Endothelial cell of umbilical vein (primary cell): ENCODE measurements at regions of chr9 and their contacts with region 1.

Region 1: GRCh38 chr9:35696525-35697215 is 6.9 kb upstream of the TPM2 start:
- DNase-seq: peak; percentile 59
- H3K4me3 ChIP-seq: no peak overlapping the region
- H3K27ac ChIP-seq: no peak overlapping the region
- H3K4me1 ChIP-seq: no peaks in the 10 kb centered on the region
- H3K27me3 ChIP-seq: no peaks in the 10 kb centered on the region
- CTCF ChIP-seq: peak; percentile 86 to 94
- POLR2A ChIP-seq: peak; percentile 30

Region 2: GRCh38 chr9:35603987-35604577 is 92.6 kb before region 1 on chr9:
- CTCF ChIA-PET with region 1: interaction called, 20 read pairs
- POLR2A ChIA-PET with region 1: no interaction called
- dilution Hi-C with region 1: no loop called
- intact Hi-C with region 1: no loop called
- DNase-seq: peak; percentile 100
- H3K4me3 ChIP-seq: peak overlapping the region; percentile 0 to 41 (median 27)
- H3K27ac ChIP-seq: no peak overlapping the region
- H3K4me1 ChIP-seq: peaks cover 16% of the 10 kb centered on the region
- H3K27me3 ChIP-seq: peaks cover 0 to 2% of the 10 kb centered on the region in 2 experiments
- CTCF ChIP-seq: peak; percentile 88 to 99
- POLR2A ChIP-seq: no peak

Region 3: GRCh38 chr9:35646533-35647265 is 50.0 kb before region 1 on chr9:
- CTCF ChIA-PET with region 1: interaction called, 14 read pairs
- POLR2A ChIA-PET with region 1: no interaction called
- dilution Hi-C with region 1: no loop called
- intact Hi-C with region 1: loop called (anchors 1 kb)
- DNase-seq: peak; percentile 91
- H3K4me3 ChIP-seq: peak overlapping the region; percentile 39 to 80 (median 47)
- H3K27ac ChIP-seq: peak overlapping the region; percentile 24
- H3K4me1 ChIP-seq: peaks cover 6% of the 10 kb centered on the region
- H3K27me3 ChIP-seq: peaks cover 0 to 2% of the 10 kb centered on the region in 2 experiments
- CTCF ChIP-seq: peak; percentile 91 to 98
- POLR2A ChIP-seq: peak; percentile 27

Region 4: DNA sequence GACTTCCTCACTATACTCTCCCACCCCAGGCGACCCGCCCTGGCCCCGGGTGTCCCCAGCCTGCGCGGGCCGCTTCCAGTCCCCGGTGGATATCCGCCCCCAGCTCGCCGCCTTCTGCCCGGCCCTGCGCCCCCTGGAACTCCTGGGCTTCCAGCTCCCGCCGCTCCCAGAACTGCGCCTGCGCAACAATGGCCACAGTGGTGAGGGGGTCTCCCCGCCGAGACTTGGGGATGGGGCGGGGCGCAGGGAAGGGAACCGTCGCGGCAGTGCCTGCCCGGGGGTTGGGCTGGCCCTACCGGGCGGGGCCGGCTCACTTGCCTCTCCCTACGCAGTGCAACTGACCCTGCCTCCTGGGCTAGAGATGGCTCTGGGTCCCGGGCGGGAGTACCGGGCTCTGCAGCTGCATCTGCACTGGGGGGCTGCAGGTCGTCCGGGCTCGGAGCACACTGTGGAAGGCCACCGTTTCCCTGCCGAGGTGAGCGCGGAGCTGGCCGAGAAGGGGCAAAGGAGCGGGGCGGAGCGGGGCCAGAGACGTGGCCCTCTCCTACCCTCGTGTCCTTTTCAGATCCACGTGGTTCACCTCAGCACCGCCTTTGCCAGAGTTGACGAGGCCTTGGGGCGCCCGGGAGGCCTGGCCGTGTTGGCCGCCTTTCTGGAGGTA is 20.8 kb before region 1 on chr9:
- CTCF ChIA-PET with region 1: interaction called, 12 read pairs
- POLR2A ChIA-PET with region 1: no interaction called
- dilution Hi-C with region 1: no loop called
- intact Hi-C with region 1: no loop called
- DNase-seq: peak; percentile 42
- H3K4me3 ChIP-seq: peak overlapping the region; percentile 34 to 43 (median 40)
- H3K27ac ChIP-seq: no peak overlapping the region
- H3K4me1 ChIP-seq: peaks cover 5% of the 10 kb centered on the region
- H3K27me3 ChIP-seq: peaks cover 3 to 11% of the 10 kb centered on the region in 2 experiments
- CTCF ChIP-seq: no peak
- POLR2A ChIP-seq: no peak

Region 5: GRCh38 chr9:35716230-35716629 is 19.6 kb after region 1 on chr9:
- CTCF ChIA-PET with region 1: interaction called, 53 read pairs
- POLR2A ChIA-PET with region 1: interaction called, 3 read pairs
- dilution Hi-C with region 1: no loop called
- intact Hi-C with region 1: no loop called
- DNase-seq: no peak
- H3K4me3 ChIP-seq: no peak overlapping the region
- H3K27ac ChIP-seq: no peak overlapping the region
- H3K4me1 ChIP-seq: no peaks in the 10 kb centered on the region
- H3K27me3 ChIP-seq: no peaks in the 10 kb centered on the region
- CTCF ChIP-seq: no peak
- POLR2A ChIP-seq: no peak

Region 6: DNA sequence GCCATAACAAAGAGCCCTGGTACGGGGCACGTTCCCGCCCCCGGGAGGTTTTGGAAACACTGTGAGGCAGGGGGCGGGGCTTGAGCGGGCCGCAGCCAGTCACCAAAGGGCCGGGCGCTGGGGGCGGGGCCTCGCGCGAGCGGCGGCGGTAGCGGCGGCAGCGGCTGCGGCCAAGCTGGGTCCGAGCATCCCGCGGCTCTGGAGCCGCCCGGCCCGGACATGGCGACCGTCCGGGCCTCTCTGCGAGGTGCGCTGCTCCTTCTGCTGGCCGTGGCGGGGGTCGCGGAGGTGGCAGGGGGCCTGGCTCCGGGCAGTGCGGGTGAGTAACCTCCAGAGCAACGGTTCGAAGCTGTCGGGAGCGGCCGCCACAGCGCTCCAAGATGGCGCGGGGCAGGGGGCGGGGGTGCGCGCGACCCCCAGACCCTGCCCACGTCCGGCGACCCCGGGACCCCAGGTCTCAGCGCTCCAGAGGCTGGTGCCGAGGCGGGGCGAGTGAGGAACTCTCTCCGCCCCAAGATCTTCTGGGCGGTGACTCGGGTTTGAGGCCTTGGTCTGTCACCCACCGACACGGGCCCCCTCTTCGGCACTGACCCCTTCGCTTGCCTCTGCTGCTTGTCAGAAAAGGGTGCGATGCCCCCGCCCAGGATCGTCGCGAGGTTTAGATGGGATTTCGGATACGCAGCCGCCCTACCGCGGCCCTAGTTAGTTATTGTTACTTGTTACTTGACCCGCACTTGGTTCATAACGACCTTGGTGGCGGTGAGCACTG is 340.3 kb after region 1 on chr9 and contains the start of gene RECK:
- CTCF ChIA-PET with region 1: no interaction called
- POLR2A ChIA-PET with region 1: no interaction called
- dilution Hi-C with region 1: no loop called
- intact Hi-C with region 1: no loop called
- DNase-seq: peak; percentile 72
- H3K4me3 ChIP-seq: peak within 1 kb of the TSS; percentile 76 to 89 (median 81)
- H3K27ac ChIP-seq: peak within 1 kb of the TSS; percentile 72
- H3K4me1 ChIP-seq: peaks cover 34% of the 10 kb centered on the region
- H3K27me3 ChIP-seq: no peaks in the 10 kb centered on the region
- CTCF ChIP-seq: no peak
- POLR2A ChIP-seq: peak; percentile 77
- total RNA-seq, gene RECK: 14.1 and 14.5 TPM in 2 replicates